ENCODE measurements at regions of chr11 and their contacts with region 1.

Region 1: DNA sequence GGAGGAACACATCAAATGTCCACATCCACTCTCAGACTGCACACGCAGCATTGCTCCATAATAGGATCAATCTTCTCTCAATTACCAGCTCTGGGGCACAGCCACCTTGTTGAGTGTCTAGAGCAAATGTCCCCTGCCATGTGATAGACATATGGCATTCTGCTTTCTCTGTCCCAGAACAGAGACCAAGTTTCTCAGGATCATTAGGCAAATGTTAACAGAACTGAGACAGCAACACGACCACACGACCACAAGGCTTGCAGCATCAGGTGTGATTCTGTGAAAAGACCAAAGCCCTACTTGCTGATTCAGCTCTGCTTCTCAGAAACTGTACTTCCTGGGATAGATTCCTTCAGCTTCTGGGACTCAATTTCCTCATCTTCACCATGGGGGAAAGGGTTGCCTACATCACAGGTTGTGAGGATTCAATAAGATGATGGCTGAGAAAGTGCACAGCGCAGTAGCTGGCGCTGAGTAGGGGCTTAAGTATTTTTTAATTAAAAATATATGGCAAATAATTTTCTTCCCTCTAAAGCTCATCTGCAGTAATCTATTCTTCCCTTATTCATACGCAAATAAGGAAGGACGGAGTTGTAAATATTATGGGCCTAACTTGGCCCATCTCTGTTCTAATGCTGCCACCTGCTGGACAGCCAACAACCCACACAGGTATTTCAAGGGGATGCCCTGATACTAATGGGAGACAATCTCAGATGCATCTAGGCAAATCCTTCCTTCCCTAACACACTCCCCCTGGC is 54.3 kb upstream of the USP47 start:
- DNase-seq: peak; percentile 64
- H3K4me3 ChIP-seq: no peak overlapping the region
- H3K27ac ChIP-seq: no peak overlapping the region
- H3K4me1 ChIP-seq: no peaks in the 10 kb centered on the region
- CTCF ChIP-seq: peak; percentile 93

Region 2: GRCh38 chr11:10933455-10934292 is 853.8 kb before region 1 on chr11:
- CTCF ChIA-PET with region 1: no interaction called
- POLR2A ChIA-PET with region 1: interaction called, 7 read pairs
- intact Hi-C with region 1: loop called (anchors 1 kb)
- DNase-seq: peak; percentile 80
- H3K4me3 ChIP-seq: peak overlapping the region; percentile 49
- H3K27ac ChIP-seq: no peak overlapping the region
- H3K4me1 ChIP-seq: peaks cover 6% of the 10 kb centered on the region
- CTCF ChIP-seq: peak; percentile 98

Region 3: GRCh38 chr11:11028017-11028692 is 759.3 kb before region 1 on chr11:
- CTCF ChIA-PET with region 1: no interaction called
- POLR2A ChIA-PET with region 1: no interaction called
- intact Hi-C with region 1: loop called (anchors 1 kb)
- DNase-seq: peak; percentile 65
- H3K4me3 ChIP-seq: no peak overlapping the region
- H3K27ac ChIP-seq: no peak overlapping the region
- H3K4me1 ChIP-seq: no peaks in the 10 kb centered on the region
- CTCF ChIP-seq: peak; percentile 96

Region 4: GRCh38 chr11:11374358-11375148 is 412.9 kb before region 1 on chr11:
- CTCF ChIA-PET with region 1: no interaction called
- POLR2A ChIA-PET with region 1: no interaction called
- intact Hi-C with region 1: no loop called
- DNase-seq: no peak
- H3K4me3 ChIP-seq: no peak overlapping the region
- H3K27ac ChIP-seq: no peak overlapping the region
- H3K4me1 ChIP-seq: no peaks in the 10 kb centered on the region
- CTCF ChIP-seq: no peak